MCF 10A (cell line): ENCODE measurements at regions of chr1 and their contacts with region 1.

Region 1: GRCh38 chr1:212256369-212256768 is 28.8 kb upstream of the PPP2R5A start:
- DNase-seq: no peak
- H3K4me3 Mint-ChIP-seq: no peak overlapping the region
- H3K27ac Mint-ChIP-seq: peak overlapping the region; percentile 20
- H3K4me1 Mint-ChIP-seq: peaks cover 34% of the 10 kb centered on the region
- H3K27me3 Mint-ChIP-seq: peaks cover 2% of the 10 kb centered on the region
- CTCF ChIP-seq: no peak

Region 2: DNA sequence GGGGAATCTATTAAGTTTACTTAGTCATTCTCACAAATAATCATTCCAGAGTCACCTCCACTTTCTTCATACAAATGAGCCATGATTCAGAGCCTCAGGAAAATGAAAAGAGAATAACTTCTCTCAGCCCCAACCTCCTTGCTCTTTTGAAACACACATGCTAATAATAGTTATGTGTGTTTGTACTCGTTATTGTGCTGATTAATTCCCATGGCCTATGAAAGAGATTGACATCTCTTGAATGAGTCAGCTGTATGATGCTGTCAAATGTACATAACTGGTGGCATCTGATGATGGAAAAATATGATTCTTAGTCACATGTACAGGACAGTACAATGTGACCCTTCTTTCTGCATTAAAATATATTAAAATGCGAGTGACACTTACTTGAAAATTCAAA is 179.3 kb before region 1 on chr1:
- CTCF ChIA-PET with region 1: interaction called, 28 read pairs
- POLR2A ChIA-PET with region 1: interaction called, 10 read pairs
- intact Hi-C with region 1: no loop called
- DNase-seq: peak; percentile 51
- H3K4me3 Mint-ChIP-seq: no peak overlapping the region
- H3K27ac Mint-ChIP-seq: peak overlapping the region; percentile 41
- H3K4me1 Mint-ChIP-seq: peaks cover 13% of the 10 kb centered on the region
- H3K27me3 Mint-ChIP-seq: no peaks in the 10 kb centered on the region
- CTCF ChIP-seq: no peak

Region 3: DNA sequence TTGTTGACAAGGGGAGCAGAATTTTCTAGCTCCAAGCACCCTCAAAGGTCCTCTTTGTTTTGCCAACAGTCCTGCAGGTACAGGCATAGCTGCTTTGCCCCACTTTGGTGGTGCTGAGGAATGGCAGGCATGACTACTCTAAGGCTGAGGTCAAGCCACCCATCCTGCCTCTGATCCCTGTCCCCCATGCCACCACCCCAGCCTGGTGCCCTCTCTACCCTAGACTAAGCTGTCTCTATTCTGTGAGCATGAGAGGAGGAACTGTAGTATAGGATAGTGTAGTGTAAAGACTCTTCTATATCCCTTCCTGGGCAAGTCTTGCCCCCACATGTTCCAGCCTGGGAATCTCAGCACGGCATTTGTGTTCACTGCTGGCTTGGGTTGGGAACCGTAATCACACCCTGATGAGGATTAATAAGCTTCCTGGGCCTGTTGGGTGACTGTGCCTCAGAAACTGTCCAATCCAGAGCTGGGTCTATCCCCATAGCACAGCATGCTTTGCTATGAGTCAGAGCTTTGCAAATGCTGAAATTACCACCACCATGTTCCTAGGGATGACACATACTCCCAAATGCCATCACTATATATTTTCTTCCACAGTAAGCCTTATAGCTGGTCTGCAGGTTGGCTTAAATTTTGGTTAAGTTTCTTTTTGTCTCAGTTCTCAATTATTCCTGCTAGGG is 76.8 kb before region 1 on chr1:
- CTCF ChIA-PET with region 1: no interaction called
- POLR2A ChIA-PET with region 1: interaction called, 11 read pairs
- intact Hi-C with region 1: loop called (anchors 1 kb)
- DNase-seq: peak; percentile 96
- H3K4me3 Mint-ChIP-seq: no peak overlapping the region
- H3K27ac Mint-ChIP-seq: peak overlapping the region; percentile 71
- H3K4me1 Mint-ChIP-seq: peaks cover 9% of the 10 kb centered on the region
- H3K27me3 Mint-ChIP-seq: no peaks in the 10 kb centered on the region
- CTCF ChIP-seq: no peak

Region 4: DNA sequence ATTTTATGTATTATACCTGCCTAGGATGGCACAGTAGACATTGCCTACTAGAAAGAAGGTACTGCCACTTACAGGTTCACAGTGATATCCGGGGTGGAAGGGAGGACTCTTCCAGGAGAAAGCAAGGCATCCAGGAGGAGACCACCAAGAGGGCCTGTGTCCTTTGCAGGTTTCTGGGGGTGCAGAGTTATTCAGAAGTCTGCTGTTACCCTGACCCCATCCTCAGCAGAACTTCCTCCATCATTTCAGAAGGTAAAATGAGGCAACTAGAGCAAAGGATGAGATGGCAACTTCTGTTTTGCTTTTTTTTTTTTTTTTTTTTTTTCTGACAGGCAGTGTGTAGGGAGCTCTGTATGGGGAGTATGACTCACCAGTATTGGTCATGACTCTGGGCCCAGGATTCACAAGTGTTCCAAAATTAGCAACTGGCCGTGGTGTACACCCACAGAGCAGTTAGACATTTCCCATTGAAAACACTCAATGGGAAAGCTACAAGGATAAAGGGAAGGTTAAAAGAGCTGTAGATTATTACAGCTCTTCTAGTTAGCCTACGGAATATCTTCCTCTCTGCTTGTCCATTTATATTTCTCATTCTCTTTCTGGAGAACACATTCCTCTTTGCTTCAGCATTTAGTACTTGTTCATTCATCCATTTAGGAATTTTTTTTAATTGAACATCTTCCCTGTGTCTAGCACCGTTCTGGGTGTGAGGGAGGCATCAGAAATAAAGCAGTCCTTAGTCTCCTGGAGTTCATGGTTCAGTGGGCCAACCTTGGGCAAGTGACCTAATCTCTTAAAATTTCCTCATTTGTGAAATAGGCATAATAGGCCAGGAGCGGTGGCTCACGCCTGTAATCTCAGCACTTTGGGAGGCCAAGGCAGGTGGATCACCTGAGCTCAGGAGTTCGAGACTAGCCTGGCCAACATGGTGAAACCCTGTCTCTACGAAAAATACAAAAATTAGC is 21.7 kb before region 1 on chr1:
- CTCF ChIA-PET with region 1: interaction called, 8 read pairs
- POLR2A ChIA-PET with region 1: interaction called, 15 read pairs
- intact Hi-C with region 1: no loop called
- DNase-seq: peak; percentile 99
- H3K4me3 Mint-ChIP-seq: no peak overlapping the region
- H3K27ac Mint-ChIP-seq: peak overlapping the region; percentile 44
- H3K4me1 Mint-ChIP-seq: peaks cover 19% of the 10 kb centered on the region
- H3K27me3 Mint-ChIP-seq: no peaks in the 10 kb centered on the region
- CTCF ChIP-seq: no peak

Region 5: DNA sequence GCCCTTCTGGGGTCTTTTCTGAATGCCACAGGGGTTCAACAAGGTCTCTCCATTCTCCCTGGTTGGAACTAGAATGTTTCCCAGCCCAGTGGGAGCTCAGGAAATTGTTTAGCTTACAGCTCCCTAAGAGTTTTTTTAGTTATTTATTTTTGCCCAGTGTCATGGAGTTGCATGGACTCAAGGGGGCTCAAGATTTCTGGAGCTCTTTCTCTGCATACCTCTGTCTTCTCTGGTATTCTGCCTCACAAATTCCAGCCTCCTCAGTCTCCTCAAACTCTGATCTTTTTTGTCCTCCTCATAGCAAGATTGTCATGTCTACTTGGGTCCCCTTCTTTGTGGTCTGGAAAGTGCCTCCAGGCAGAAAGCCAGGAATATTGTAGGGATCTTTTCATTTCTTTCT is 12.9 kb after region 1 on chr1:
- CTCF ChIA-PET with region 1: interaction called, 5 read pairs
- POLR2A ChIA-PET with region 1: interaction called, 18 read pairs
- intact Hi-C with region 1: no loop called
- DNase-seq: no peak
- H3K4me3 Mint-ChIP-seq: no peak overlapping the region
- H3K27ac Mint-ChIP-seq: no peak overlapping the region
- H3K4me1 Mint-ChIP-seq: no peaks in the 10 kb centered on the region
- H3K27me3 Mint-ChIP-seq: no peaks in the 10 kb centered on the region
- CTCF ChIP-seq: no peak

Region 6: DNA sequence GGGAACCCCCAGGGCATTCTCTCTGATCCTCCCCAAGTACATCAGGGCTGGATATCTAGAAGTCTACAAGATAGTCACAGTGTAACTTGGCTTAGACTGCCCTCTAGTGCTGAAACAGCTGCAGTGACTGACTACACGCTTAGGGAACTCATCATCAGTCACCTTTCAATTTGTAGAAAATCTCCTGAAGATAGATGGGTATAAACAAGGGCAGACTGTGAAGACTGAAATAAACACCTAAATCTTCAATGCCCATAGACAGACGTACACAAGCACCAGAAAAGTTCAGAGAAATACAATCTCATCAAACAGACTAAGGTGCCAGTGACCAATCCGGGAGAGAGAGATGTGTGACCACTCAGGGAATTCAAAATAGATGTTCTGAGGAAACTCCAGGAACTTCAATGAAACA is 111.7 kb after region 1 on chr1:
- CTCF ChIA-PET with region 1: no interaction called
- POLR2A ChIA-PET with region 1: no interaction called
- intact Hi-C with region 1: no loop called
- DNase-seq: peak; percentile 93
- H3K4me3 Mint-ChIP-seq: no peak overlapping the region
- H3K27ac Mint-ChIP-seq: peak overlapping the region; percentile 5
- H3K4me1 Mint-ChIP-seq: peaks cover 15% of the 10 kb centered on the region
- H3K27me3 Mint-ChIP-seq: no peaks in the 10 kb centered on the region
- CTCF ChIP-seq: peak; percentile 99